ENCODE measurements at regions of chr7 and their contacts with region 1.

Region 1: GRCh38 chr7:131107337-131108211 is 220.1 kb upstream of the MKLN1 start:
- DNase-seq: no peak
- ATAC-seq: peak; percentile 61
- H3K4me3 ChIP-seq: peak overlapping the region; percentile 90
- H3K27ac ChIP-seq: peak overlapping the region; percentile 88
- H3K4me1 ChIP-seq: peaks cover 35% of the 10 kb centered on the region
- H3K27me3 ChIP-seq: no peaks in the 10 kb centered on the region
- CTCF ChIP-seq: peak in 1 of 3 experiments; percentile 17; a peak in 1 of 6 replicates
- EP300 ChIP-seq: peak; percentile 92 to 95
- POLR2A ChIP-seq: peak; percentile 92
- RAD21 ChIP-seq: 0 out of 2 replicates have a peak, but pooled peaks have one; percentile 8

Region 2: GRCh38 chr7:130961128-130961601 is 146.4 kb before region 1 on chr7:
- CTCF ChIA-PET with region 1: interaction called, 3 read pairs
- POLR2A ChIA-PET with region 1: no interaction called
- RAD21 ChIA-PET with region 1: no interaction called
- SMC1A ChIA-PET with region 1: interaction called, 3 read pairs
- in situ Hi-C with region 1: no loop called
- intact Hi-C with region 1: loop called (anchors 5 kb)
- DNase-seq: peak; percentile 98
- ATAC-seq: peak; percentile 82
- H3K4me3 ChIP-seq: peak overlapping the region; percentile 72
- H3K27ac ChIP-seq: peak overlapping the region; percentile 93
- H3K4me1 ChIP-seq: peaks cover 17% of the 10 kb centered on the region
- H3K27me3 ChIP-seq: no peaks in the 10 kb centered on the region
- CTCF ChIP-seq: no peak
- EP300 ChIP-seq: peak; percentile 90 to 91
- POLR2A ChIP-seq: peak; percentile 95
- RAD21 ChIP-seq: no peak

Region 3: DNA sequence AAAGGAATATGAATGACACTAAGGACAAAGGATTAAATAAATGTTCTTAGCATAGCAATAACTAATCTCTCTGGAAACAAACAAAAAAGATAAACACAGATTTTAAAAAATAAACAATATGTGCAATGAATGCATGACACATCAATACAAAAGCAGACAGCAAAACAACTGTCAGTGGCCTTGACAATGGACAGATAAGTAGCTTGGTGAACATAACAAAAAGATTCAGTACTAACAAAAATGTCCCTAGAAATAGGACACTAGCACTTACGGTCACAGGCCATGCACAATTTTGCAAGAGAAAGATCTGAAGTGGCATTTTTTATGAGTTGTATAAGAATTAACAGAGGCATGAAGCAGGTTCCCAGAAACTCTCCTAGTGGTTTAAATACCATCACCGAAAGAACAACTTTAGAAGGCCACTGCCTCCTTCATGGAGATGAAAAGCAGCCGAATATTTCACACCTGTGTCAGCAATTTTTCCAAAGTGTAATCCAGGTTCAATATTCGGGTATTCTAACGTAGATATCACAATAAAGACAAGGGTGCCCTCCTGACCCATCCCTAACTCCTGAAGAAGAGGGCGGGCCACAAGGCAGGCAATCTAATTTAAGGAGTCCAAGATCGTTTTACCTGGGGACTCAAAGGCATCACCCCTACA is 11.2 kb before region 1 on chr7:
- CTCF ChIA-PET with region 1: no interaction called
- POLR2A ChIA-PET with region 1: interaction called, 4 read pairs
- RAD21 ChIA-PET with region 1: interaction called, 17 read pairs
- SMC1A ChIA-PET with region 1: interaction called, 5 read pairs
- in situ Hi-C with region 1: no loop called
- intact Hi-C with region 1: no loop called
- DNase-seq: no peak
- ATAC-seq: no peak
- H3K4me3 ChIP-seq: no peak overlapping the region
- H3K27ac ChIP-seq: no peak overlapping the region
- H3K4me1 ChIP-seq: peaks cover 20% of the 10 kb centered on the region
- H3K27me3 ChIP-seq: no peaks in the 10 kb centered on the region
- CTCF ChIP-seq: no peak
- EP300 ChIP-seq: no peak
- POLR2A ChIP-seq: no peak
- RAD21 ChIP-seq: no peak

Region 4: GRCh38 chr7:131131746-131132431 is 24.3 kb after region 1 on chr7:
- CTCF ChIA-PET with region 1: no interaction called
- POLR2A ChIA-PET with region 1: interaction called, 110 read pairs
- RAD21 ChIA-PET with region 1: interaction called, 4 read pairs
- SMC1A ChIA-PET with region 1: interaction called, 10 read pairs
- in situ Hi-C with region 1: no loop called
- intact Hi-C with region 1: no loop called
- DNase-seq: no peak
- ATAC-seq: no peak
- H3K4me3 ChIP-seq: no peak overlapping the region
- H3K27ac ChIP-seq: no peak overlapping the region
- H3K4me1 ChIP-seq: no peaks in the 10 kb centered on the region
- H3K27me3 ChIP-seq: no peaks in the 10 kb centered on the region
- CTCF ChIP-seq: no peak
- EP300 ChIP-seq: no peak
- POLR2A ChIP-seq: no peak
- RAD21 ChIP-seq: no peak

Region 5: DNA sequence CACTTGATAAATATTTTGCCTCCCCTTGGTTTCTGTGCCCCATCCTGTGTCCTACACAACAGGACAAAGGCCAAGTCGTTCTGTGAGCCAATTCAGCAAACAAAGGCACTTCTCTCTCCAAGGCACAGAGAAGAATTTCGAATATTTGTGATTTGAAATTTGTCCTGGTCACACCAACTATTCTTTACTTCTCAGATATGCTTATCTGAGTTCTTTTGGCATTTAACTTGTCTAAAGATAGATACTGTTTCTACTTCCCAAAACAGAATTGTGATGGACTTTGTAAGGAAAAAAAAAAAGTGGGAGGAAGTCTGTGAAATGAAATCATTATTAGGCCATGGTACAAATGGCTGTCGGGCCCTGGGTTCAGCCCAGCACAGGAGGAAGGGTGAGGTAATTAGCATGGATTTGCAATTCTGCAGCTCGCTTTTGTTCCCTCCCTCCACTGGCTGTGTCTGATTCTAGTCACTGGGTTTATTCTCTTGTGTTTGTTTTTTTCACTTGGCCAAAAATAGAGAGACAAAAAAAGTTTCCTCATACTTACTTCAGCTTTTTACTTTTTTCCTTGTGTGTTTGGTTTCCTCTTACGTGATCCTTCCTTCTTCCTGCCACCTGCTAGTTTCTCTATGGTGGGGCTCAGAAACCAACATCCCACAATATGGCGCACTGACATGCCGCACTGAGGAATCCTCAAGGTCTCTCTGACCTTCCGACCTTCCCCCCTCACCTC is 111.9 kb after region 1 on chr7:
- CTCF ChIA-PET with region 1: interaction called, 3 read pairs
- POLR2A ChIA-PET with region 1: interaction called, 6 read pairs
- RAD21 ChIA-PET with region 1: interaction called, 18 read pairs
- SMC1A ChIA-PET with region 1: interaction called, 6 read pairs
- in situ Hi-C with region 1: no loop called
- intact Hi-C with region 1: no loop called
- DNase-seq: no peak
- ATAC-seq: peak; percentile 64
- H3K4me3 ChIP-seq: no peak overlapping the region
- H3K27ac ChIP-seq: peak overlapping the region; percentile 24
- H3K4me1 ChIP-seq: peaks cover 18% of the 10 kb centered on the region
- H3K27me3 ChIP-seq: no peaks in the 10 kb centered on the region
- CTCF ChIP-seq: no peak
- EP300 ChIP-seq: peak in 1 of 2 experiments; percentile 25; a peak in 1 of 4 replicates
- POLR2A ChIP-seq: no peak
- RAD21 ChIP-seq: no peak

Region 6: GRCh38 chr7:131302876-131303707 is 195.5 kb after region 1 on chr7:
- CTCF ChIA-PET with region 1: interaction called, 22 read pairs
- POLR2A ChIA-PET with region 1: no interaction called
- RAD21 ChIA-PET with region 1: interaction called, 7 read pairs
- SMC1A ChIA-PET with region 1: interaction called, 8 read pairs
- in situ Hi-C with region 1: no loop called
- intact Hi-C with region 1: no loop called
- DNase-seq: no peak
- ATAC-seq: peak; percentile 81
- H3K4me3 ChIP-seq: no peak overlapping the region
- H3K27ac ChIP-seq: no peak overlapping the region
- H3K4me1 ChIP-seq: no peaks in the 10 kb centered on the region
- H3K27me3 ChIP-seq: no peaks in the 10 kb centered on the region; a peak in 1 of 4 replicates
- CTCF ChIP-seq: peak; percentile 59 to 68 (median 64); a peak in 5 of 6 replicates
- EP300 ChIP-seq: no peak
- POLR2A ChIP-seq: no peak
- RAD21 ChIP-seq: peak; percentile 87

Region 7: GRCh38 chr7:131424219-131424822 is 316.7 kb after region 1 on chr7:
- CTCF ChIA-PET with region 1: interaction called, 4 read pairs
- POLR2A ChIA-PET with region 1: no interaction called
- RAD21 ChIA-PET with region 1: interaction called, 3 read pairs
- SMC1A ChIA-PET with region 1: interaction called, 3 read pairs
- in situ Hi-C with region 1: no loop called
- intact Hi-C with region 1: loop called (anchors 5 kb)
- DNase-seq: peak; percentile 4
- ATAC-seq: peak; percentile 87
- H3K4me3 ChIP-seq: no peak overlapping the region
- H3K27ac ChIP-seq: no peak overlapping the region
- H3K4me1 ChIP-seq: no peaks in the 10 kb centered on the region
- H3K27me3 ChIP-seq: no peaks in the 10 kb centered on the region
- CTCF ChIP-seq: peak; percentile 25 to 61 (median 55); a peak in 5 of 6 replicates
- EP300 ChIP-seq: no peak
- POLR2A ChIP-seq: no peak
- RAD21 ChIP-seq: peak; percentile 64

Region 8: DNA sequence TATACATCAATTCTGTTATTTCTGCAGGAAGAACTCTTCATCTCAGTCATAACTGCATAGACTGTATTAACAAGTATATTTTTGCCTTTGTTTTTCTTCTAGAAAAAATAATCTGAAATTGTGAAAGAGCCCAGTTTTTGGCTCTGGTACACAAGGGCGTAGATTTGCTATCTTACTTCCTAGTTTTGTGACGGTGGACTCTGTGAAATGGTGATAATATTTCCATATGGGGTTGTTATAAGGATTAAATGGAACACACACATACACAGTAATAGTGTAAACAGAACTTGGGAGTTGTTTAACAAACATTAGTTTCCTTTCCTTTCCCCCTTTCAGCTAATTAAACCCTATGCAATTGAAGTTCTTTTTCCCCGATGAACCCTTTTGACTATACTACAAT is 328.8 kb after region 1 on chr7:
- CTCF ChIA-PET with region 1: no interaction called
- POLR2A ChIA-PET with region 1: no interaction called
- RAD21 ChIA-PET with region 1: no interaction called
- SMC1A ChIA-PET with region 1: no interaction called
- in situ Hi-C with region 1: no loop called
- intact Hi-C with region 1: no loop called
- DNase-seq: no peak
- ATAC-seq: no peak
- H3K4me3 ChIP-seq: no peak overlapping the region
- H3K27ac ChIP-seq: no peak overlapping the region
- H3K4me1 ChIP-seq: no peaks in the 10 kb centered on the region
- H3K27me3 ChIP-seq: no peaks in the 10 kb centered on the region
- CTCF ChIP-seq: no peak
- EP300 ChIP-seq: no peak
- POLR2A ChIP-seq: no peak
- RAD21 ChIP-seq: no peak

Region 9: GRCh38 chr7:131532570-131533091 is 425.1 kb after region 1 on chr7:
- CTCF ChIA-PET with region 1: no interaction called
- POLR2A ChIA-PET with region 1: no interaction called
- RAD21 ChIA-PET with region 1: no interaction called
- SMC1A ChIA-PET with region 1: no interaction called
- in situ Hi-C with region 1: no loop called
- intact Hi-C with region 1: no loop called
- DNase-seq: no peak
- ATAC-seq: no peak
- H3K4me3 ChIP-seq: no peak overlapping the region
- H3K27ac ChIP-seq: no peak overlapping the region
- H3K4me1 ChIP-seq: no peaks in the 10 kb centered on the region
- H3K27me3 ChIP-seq: no peaks in the 10 kb centered on the region
- CTCF ChIP-seq: no peak
- EP300 ChIP-seq: no peak
- POLR2A ChIP-seq: no peak
- RAD21 ChIP-seq: no peak